ENCODE measurements at regions of chr15 and their contacts with region 1.

Region 1: GRCh38 chr15:76139368-76140073 is 79.7 kb downstream of the TMEM266 start:
- DNase-seq: peak; percentile 78
- ATAC-seq: peak; percentile 89
- H3K4me3 ChIP-seq: no peak overlapping the region
- H3K4me3 Mint-ChIP-seq: no peak overlapping the region
- H3K27ac ChIP-seq: no peak overlapping the region
- H3K27ac Mint-ChIP-seq: no peak overlapping the region
- H3K4me1 ChIP-seq: peaks cover 0 to 4% of the 10 kb centered on the region in 2 donors
- H3K4me1 Mint-ChIP-seq: no peaks in the 10 kb centered on the region
- H3K27me3 ChIP-seq: peaks cover 0 to 14% (median 3%) of the 10 kb centered on the region in 4 experiments
- H3K27me3 Mint-ChIP-seq: peaks cover 20% of the 10 kb centered on the region
- CTCF ChIP-seq: peak; percentile 94

Region 2: DNA sequence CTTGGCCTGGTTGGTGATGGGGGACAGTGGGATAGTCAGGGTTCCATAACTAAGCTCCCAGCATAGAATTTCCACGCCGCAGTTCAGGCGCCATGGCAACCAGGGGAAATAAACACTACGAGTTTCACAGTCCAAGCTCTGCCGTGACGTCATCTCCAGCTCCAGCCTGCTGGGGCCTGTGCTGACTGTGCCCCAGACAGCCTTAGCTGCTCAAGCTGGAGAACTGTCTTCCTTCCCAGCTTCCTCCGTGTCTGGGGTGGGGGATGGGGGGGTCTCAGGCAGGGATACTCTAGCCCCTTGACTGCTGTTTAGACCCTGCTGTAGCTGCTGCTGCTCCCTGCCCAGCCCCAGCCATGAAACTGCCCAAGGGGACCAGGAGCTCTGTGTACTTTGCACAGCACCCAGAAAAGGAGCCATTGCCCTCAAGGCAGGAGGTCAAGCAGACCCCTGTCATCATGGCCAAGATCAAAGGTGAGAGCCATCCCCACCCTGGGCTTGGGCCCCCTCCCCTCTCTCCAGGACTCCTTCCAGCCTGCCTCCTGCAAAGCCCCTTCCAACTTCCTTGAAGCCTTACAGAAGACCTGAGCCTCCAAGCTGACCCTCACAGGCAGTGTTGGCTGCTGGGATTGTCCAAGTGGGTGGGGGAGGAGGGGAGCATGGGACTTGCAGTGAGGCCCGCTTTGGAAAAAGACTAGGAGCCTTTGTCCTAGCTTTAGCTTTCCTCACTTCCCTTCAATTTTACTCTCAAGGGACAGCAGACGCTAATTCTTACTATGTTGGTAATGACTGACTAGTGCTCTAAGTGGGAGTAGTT is 415.5 kb before region 1 on chr15:
- CTCF ChIA-PET with region 1: interaction called, 15 read pairs
- POLR2A ChIA-PET with region 1: no interaction called
- intact Hi-C with region 1: no loop called
- DNase-seq: peak; percentile 72
- ATAC-seq: peak; percentile 57
- H3K4me3 ChIP-seq: no peak overlapping the region
- H3K4me3 Mint-ChIP-seq: no peak overlapping the region
- H3K27ac ChIP-seq: no peak overlapping the region
- H3K27ac Mint-ChIP-seq: no peak overlapping the region
- H3K4me1 ChIP-seq: peaks cover 0 to 7% of the 10 kb centered on the region in 2 donors
- H3K4me1 Mint-ChIP-seq: peaks cover 11% of the 10 kb centered on the region
- H3K27me3 ChIP-seq: peaks cover 0 to 7% (median 2%) of the 10 kb centered on the region in 4 experiments
- H3K27me3 Mint-ChIP-seq: peaks cover 21% of the 10 kb centered on the region
- CTCF ChIP-seq: no peak

Region 3: DNA sequence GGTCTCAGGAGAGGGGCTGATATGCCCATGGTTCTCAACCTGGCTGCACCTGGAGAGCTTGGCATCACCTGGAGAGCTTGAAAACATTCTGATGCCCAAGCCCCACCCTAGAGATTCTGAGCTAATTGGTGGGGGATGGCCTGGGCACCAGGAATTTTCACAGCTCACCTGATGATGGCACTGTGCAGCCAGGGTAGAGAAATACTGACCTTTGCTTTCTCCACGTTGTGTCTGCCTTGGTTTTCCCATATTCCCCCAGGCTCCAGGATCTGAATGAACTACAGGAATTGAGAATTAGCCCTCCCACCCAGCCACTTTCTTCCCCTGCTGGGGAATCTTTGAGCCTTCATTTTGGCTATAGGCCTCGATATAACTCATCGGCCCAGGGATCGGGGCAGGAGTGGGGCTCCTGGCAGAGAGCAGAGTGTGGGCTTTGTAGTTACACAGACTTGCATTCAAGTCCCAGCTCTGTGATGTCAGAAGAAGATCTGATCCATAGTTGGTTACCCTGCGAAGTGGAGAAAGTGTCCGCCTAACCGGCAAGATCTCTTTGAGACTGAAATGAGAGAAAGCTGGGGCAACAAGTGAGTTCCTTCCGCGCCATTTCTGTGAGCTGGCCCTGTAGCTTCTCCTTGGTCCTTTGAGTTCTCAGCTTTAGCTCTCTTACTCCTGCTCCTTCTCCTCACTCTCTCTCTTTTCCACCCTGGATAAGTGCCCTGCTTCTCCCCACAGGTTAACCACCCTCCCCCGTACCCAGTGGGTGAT is 329.4 kb before region 1 on chr15:
- CTCF ChIA-PET with region 1: interaction called, 93 read pairs
- POLR2A ChIA-PET with region 1: no interaction called
- intact Hi-C with region 1: no loop called
- DNase-seq: peak; percentile 29
- ATAC-seq: no peak
- H3K4me3 ChIP-seq: no peak overlapping the region
- H3K4me3 Mint-ChIP-seq: no peak overlapping the region
- H3K27ac ChIP-seq: no peak overlapping the region
- H3K27ac Mint-ChIP-seq: no peak overlapping the region
- H3K4me1 ChIP-seq: no peaks in the 10 kb centered on the region
- H3K4me1 Mint-ChIP-seq: no peaks in the 10 kb centered on the region
- H3K27me3 ChIP-seq: no peaks in the 10 kb centered on the region
- H3K27me3 Mint-ChIP-seq: peaks cover 14% of the 10 kb centered on the region
- CTCF ChIP-seq: peak; percentile 23

Region 4: GRCh38 chr15:75921729-75922703 is 217.5 kb before region 1 on chr15:
- CTCF ChIA-PET with region 1: interaction called, 11 read pairs
- POLR2A ChIA-PET with region 1: no interaction called
- intact Hi-C with region 1: no loop called
- DNase-seq: peak; percentile 31
- ATAC-seq: no peak
- H3K4me3 ChIP-seq: no peak overlapping the region
- H3K4me3 Mint-ChIP-seq: no peak overlapping the region
- H3K27ac ChIP-seq: no peak overlapping the region
- H3K27ac Mint-ChIP-seq: no peak overlapping the region
- H3K4me1 ChIP-seq: peaks cover 1 to 7% of the 10 kb centered on the region in 2 donors
- H3K4me1 Mint-ChIP-seq: peaks cover 27% of the 10 kb centered on the region
- H3K27me3 ChIP-seq: no peaks in the 10 kb centered on the region
- H3K27me3 Mint-ChIP-seq: no peaks in the 10 kb centered on the region
- CTCF ChIP-seq: no peak

Region 5: DNA sequence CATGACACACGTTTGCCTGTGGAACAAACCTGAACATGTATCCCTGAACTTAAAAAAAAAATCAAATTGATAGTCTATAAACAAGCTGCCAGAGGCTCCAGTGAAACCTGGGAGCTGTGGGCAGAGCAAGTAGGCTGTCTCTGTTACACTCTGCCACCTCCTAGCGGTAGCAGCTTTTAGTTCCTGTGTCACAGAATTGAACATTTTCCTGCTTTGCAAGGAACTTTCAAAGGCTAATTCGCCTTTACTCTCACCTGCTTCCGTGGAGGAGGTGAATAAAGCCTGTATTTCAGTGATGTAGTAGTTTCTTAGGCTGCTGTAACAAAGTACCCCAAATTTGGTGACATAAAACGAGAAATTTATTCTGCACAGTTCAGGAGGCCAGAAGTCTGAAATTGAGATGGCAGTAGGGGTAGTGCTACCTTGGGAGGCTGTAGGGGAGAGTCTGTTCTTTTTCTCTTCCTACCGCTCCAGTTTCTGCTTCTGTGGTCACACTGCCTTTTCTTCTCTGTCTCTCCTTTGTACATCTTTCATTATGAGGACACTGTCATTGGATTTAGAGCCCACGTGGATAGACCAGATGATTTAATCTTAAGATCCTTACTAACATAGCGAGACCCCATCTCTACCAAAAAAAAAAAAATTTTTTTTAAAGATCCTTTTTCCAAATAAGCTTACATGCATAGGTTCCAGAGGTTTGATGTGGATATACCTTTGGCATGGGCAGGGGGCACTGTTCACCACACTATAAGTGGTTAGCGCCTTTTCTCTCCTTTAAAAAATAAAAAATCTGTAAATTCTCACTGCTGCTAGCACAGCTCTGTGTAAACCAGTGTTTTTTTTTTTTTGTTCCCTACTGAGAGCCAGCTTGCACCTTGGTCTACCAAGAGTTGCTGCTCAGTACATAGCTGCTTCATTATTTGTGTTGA is 210.6 kb before region 1 on chr15:
- CTCF ChIA-PET with region 1: interaction called, 11 read pairs
- POLR2A ChIA-PET with region 1: no interaction called
- intact Hi-C with region 1: loop called (anchors 1 kb)
- DNase-seq: no peak
- ATAC-seq: no peak
- H3K4me3 ChIP-seq: no peak overlapping the region
- H3K4me3 Mint-ChIP-seq: no peak overlapping the region
- H3K27ac ChIP-seq: no peak overlapping the region
- H3K27ac Mint-ChIP-seq: no peak overlapping the region
- H3K4me1 ChIP-seq: peaks cover 9 to 15% of the 10 kb centered on the region in 2 donors
- H3K4me1 Mint-ChIP-seq: peaks cover 36% of the 10 kb centered on the region
- H3K27me3 ChIP-seq: no peaks in the 10 kb centered on the region
- H3K27me3 Mint-ChIP-seq: no peaks in the 10 kb centered on the region
- CTCF ChIP-seq: peak; percentile 15

Region 6: GRCh38 chr15:76024021-76024768 is 115.3 kb before region 1 on chr15:
- CTCF ChIA-PET with region 1: no interaction called
- POLR2A ChIA-PET with region 1: no interaction called
- intact Hi-C with region 1: no loop called
- DNase-seq: peak; percentile 2
- ATAC-seq: no peak
- H3K4me3 ChIP-seq: no peak overlapping the region
- H3K4me3 Mint-ChIP-seq: no peak overlapping the region
- H3K27ac ChIP-seq: no peak overlapping the region
- H3K27ac Mint-ChIP-seq: no peak overlapping the region
- H3K4me1 ChIP-seq: no peaks in the 10 kb centered on the region
- H3K4me1 Mint-ChIP-seq: no peaks in the 10 kb centered on the region
- H3K27me3 ChIP-seq: peaks cover 0 to 7% (median 0%) of the 10 kb centered on the region in 4 experiments
- H3K27me3 Mint-ChIP-seq: peaks cover 22% of the 10 kb centered on the region
- CTCF ChIP-seq: no peak

Region 7: GRCh38 chr15:76057332-76058000 is 82.1 kb before region 1 on chr15:
- CTCF ChIA-PET with region 1: interaction called, 97 read pairs
- POLR2A ChIA-PET with region 1: no interaction called
- intact Hi-C with region 1: loop called (anchors 1 kb)
- DNase-seq: peak; percentile 73
- ATAC-seq: peak; percentile 37
- H3K4me3 ChIP-seq: peak overlapping the region in 4 of 5 experiments; percentile 7 to 37 (median 17)
- H3K4me3 Mint-ChIP-seq: peak overlapping the region; percentile 51
- H3K27ac ChIP-seq: peak overlapping the region; percentile 54 to 83
- H3K27ac Mint-ChIP-seq: peak overlapping the region; percentile 69
- H3K4me1 ChIP-seq: peaks cover 33 to 35% of the 10 kb centered on the region in 2 donors
- H3K4me1 Mint-ChIP-seq: peaks cover 36% of the 10 kb centered on the region
- H3K27me3 ChIP-seq: peaks cover 0 to 31% (median 19%) of the 10 kb centered on the region in 4 experiments
- H3K27me3 Mint-ChIP-seq: peaks cover 26% of the 10 kb centered on the region
- CTCF ChIP-seq: peak; percentile 80

Region 8: GRCh38 chr15:76150971-76151598 is 11.6 kb after region 1 on chr15:
- CTCF ChIA-PET with region 1: interaction called, 73 read pairs
- POLR2A ChIA-PET with region 1: no interaction called
- intact Hi-C with region 1: loop called (anchors 1 kb)
- DNase-seq: peak; percentile 84
- ATAC-seq: peak; percentile 96
- H3K4me3 ChIP-seq: no peak overlapping the region
- H3K4me3 Mint-ChIP-seq: no peak overlapping the region
- H3K27ac ChIP-seq: no peak overlapping the region
- H3K27ac Mint-ChIP-seq: peak overlapping the region; percentile 26
- H3K4me1 ChIP-seq: peaks cover 11 to 16% of the 10 kb centered on the region in 2 donors
- H3K4me1 Mint-ChIP-seq: peaks cover 14% of the 10 kb centered on the region
- H3K27me3 ChIP-seq: peaks cover 0 to 9% (median 4%) of the 10 kb centered on the region in 4 experiments
- H3K27me3 Mint-ChIP-seq: peaks cover 8% of the 10 kb centered on the region
- CTCF ChIP-seq: peak; percentile 95

Measured in B cell (primary cell).